ENCODE measurements at regions of chr4 and their contacts with region 1.

Region 1: DNA sequence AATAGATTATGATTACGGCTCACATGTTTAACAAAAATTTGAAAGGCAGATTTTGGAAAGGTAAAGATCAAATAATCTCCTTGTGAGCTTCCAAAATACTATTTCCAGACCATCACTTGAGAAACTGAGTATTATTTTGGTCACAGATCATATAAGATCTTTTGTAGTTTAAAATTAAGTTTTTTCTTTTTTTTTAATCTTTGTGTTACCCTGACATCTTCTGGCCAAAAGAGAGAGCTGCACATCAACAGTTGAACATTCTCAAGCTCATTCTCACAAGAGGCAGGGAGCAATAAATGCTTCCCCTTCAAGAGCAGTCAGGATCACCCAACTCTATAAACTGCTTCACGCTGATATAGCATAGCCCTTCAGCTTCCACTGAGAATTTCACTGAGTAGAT is 15.9 kb downstream of the TMEM192 start:
- DNase-seq: no peak
- H3K4me3 ChIP-seq: no peak overlapping the region
- H3K27ac ChIP-seq: no peak overlapping the region
- H3K4me1 ChIP-seq: no peaks in the 10 kb centered on the region
- H3K27me3 ChIP-seq: no peaks in the 10 kb centered on the region
- CTCF ChIP-seq: peak; percentile 35

Region 2: GRCh38 chr4:164779811-164780216 is 317.0 kb before region 1 on chr4:
- intact Hi-C with region 1: loop called (anchors 10 kb)
- DNase-seq: peak; percentile 26
- H3K4me3 ChIP-seq: no peak overlapping the region
- H3K27ac ChIP-seq: no peak overlapping the region
- H3K4me1 ChIP-seq: peaks cover 4% of the 10 kb centered on the region
- H3K27me3 ChIP-seq: no peaks in the 10 kb centered on the region
- CTCF ChIP-seq: peak; percentile 66

Measured in colonic mucosa (tissue), 4 donors.